ENCODE measurements at regions of chrX and their contacts with region 1.

Region 1: DNA sequence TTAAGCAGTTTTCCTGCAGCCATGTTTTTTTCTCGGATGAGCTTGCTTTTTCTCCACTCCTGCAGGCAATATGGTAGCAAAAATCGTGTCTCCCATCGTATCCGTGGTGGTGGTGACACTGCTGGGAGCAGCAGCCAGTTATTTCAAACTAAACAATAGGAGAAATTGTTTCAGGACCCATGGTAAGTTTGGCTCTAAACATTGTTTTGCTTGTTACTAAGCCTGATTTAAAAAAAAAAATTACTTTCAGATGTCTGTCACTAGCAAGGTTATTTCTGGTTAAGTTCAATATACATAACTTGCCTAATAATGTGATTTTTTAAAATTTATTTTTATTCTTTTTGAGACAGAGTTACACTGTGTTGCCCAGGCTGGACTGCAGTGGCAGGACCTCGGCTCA is 17.5 kb upstream of the GYG2 start:
- DNase-seq: no peak
- ATAC-seq: no peak
- H3K4me3 ChIP-seq: no peak overlapping the region
- H3K27ac ChIP-seq: no peak overlapping the region
- H3K4me1 ChIP-seq: no peaks in the 10 kb centered on the region
- H3K27me3 ChIP-seq: no peaks in the 10 kb centered on the region
- CTCF ChIP-seq: no peak

Region 2: DNA sequence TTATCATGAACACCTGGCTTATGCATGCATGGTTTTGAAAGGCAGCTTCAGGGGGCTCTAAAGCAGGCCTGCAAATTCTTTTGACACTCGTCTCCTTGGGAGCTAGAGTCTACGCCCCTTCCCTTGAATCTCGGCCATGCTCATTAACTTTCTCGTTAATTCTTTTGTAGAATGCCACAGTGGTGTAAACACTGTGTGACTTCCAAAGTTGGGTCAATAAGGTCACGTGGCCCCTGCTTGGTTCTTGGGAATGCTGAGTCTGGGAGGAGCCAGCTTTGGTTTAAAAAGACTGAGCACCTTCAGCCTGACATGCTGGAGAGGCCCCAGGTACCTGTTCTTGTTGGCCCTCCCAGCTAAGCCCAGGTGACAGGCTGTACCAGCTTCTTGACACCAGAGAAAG is 538.9 kb before region 1 on chrX:
- intact Hi-C with region 1: no loop called
- DNase-seq: no peak
- ATAC-seq: no peak
- H3K4me3 ChIP-seq: no peak overlapping the region
- H3K27ac ChIP-seq: no peak overlapping the region
- H3K4me1 ChIP-seq: no peaks in the 10 kb centered on the region
- H3K27me3 ChIP-seq: no peaks in the 10 kb centered on the region
- CTCF ChIP-seq: no peak

Region 3: DNA sequence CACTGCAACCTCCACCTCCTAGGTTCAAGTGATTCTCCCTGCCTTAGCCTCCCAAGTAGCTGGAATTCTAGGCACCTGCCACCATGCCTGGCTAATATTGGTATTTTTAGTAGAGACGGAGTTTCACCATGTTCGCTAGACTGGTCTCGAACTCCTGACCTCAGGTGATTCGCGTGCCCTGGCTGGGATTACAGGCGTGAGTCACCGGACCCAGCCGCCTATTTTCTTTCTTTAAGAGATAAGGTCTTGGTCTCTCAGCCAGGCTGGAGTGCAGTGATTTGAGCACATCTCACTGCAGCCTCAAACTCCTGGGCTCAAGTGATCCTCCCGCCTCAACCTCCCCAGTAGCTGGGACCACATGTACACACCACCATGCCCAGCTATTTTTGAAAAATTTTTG is 477.0 kb before region 1 on chrX:
- intact Hi-C with region 1: no loop called
- DNase-seq: no peak
- ATAC-seq: no peak
- H3K4me3 ChIP-seq: no peak overlapping the region
- H3K27ac ChIP-seq: no peak overlapping the region
- H3K4me1 ChIP-seq: no peaks in the 10 kb centered on the region
- H3K27me3 ChIP-seq: no peaks in the 10 kb centered on the region
- CTCF ChIP-seq: no peak

Region 4: GRCh38 chrX:2640275-2641150 is 170.8 kb before region 1 on chrX:
- intact Hi-C with region 1: loop called (anchors 5 kb)
- DNase-seq: no peak
- ATAC-seq: no peak
- H3K4me3 ChIP-seq: no peak overlapping the region
- H3K27ac ChIP-seq: no peak overlapping the region
- H3K4me1 ChIP-seq: no peaks in the 10 kb centered on the region
- H3K27me3 ChIP-seq: no peaks in the 10 kb centered on the region
- CTCF ChIP-seq: no peak

Region 5: GRCh38 chrX:2647627-2648026 is 163.6 kb before region 1 on chrX:
- intact Hi-C with region 1: loop called (anchors 5 kb)
- DNase-seq: no peak
- ATAC-seq: no peak
- H3K4me3 ChIP-seq: no peak overlapping the region
- H3K27ac ChIP-seq: no peak overlapping the region
- H3K4me1 ChIP-seq: no peaks in the 10 kb centered on the region
- H3K27me3 ChIP-seq: no peaks in the 10 kb centered on the region
- CTCF ChIP-seq: no peak

Region 6: GRCh38 chrX:2848871-2849301 is 37.6 kb after region 1 on chrX:
- intact Hi-C with region 1: no loop called
- DNase-seq: no peak
- ATAC-seq: no peak
- H3K4me3 ChIP-seq: no peak overlapping the region
- H3K27ac ChIP-seq: no peak overlapping the region
- H3K4me1 ChIP-seq: no peaks in the 10 kb centered on the region
- H3K27me3 ChIP-seq: no peaks in the 10 kb centered on the region
- CTCF ChIP-seq: no peak